Body of pancreas (tissue), 4 donors: ENCODE measurements at regions of chr6 and their contacts with region 1.

Region 1: GRCh38 chr6:53054532-53054931 is 10.7 kb upstream of the FBXO9 start:
- DNase-seq: no peak
- ATAC-seq: no peak
- H3K4me3 ChIP-seq: no peak overlapping the region
- H3K27ac ChIP-seq: no peak overlapping the region
- H3K4me1 ChIP-seq: peaks cover 35% of the 10 kb centered on the region
- H3K27me3 ChIP-seq: no peaks in the 10 kb centered on the region
- CTCF ChIP-seq: no peak
- POLR2A ChIP-seq: no peak

Region 2: DNA sequence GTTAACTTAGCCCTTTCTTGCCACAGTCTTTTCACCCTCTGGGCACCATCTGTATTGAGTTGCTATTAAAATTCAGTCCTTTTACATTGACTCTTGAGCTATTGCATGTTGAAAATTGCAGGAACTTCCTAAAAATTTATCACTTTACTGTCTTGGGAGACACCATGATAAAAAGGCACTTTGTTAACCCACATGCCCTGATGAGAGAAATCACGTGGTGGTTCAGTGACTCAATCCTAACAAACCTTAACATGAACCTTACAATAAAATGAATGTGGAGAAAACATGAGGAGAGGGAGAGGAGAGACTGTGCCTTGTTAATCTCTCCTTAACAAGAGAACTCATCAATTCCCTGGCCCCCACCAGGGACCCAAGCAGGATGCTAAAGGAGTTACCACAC is 90.2 kb before region 1 on chr6:
- intact Hi-C with region 1: no loop called
- DNase-seq: no peak
- ATAC-seq: no peak
- H3K4me3 ChIP-seq: no peak overlapping the region
- H3K27ac ChIP-seq: no peak overlapping the region
- H3K4me1 ChIP-seq: no peaks in the 10 kb centered on the region
- H3K27me3 ChIP-seq: no peaks in the 10 kb centered on the region
- CTCF ChIP-seq: no peak
- POLR2A ChIP-seq: no peak

Region 3: GRCh38 chr6:53005663-53006250 is 48.8 kb before region 1 on chr6:
- intact Hi-C with region 1: loop called (anchors 5 kb)
- DNase-seq: no peak
- ATAC-seq: no peak
- H3K4me3 ChIP-seq: no peak overlapping the region
- H3K27ac ChIP-seq: no peak overlapping the region
- H3K4me1 ChIP-seq: no peaks in the 10 kb centered on the region
- H3K27me3 ChIP-seq: no peaks in the 10 kb centered on the region
- CTCF ChIP-seq: no peak
- POLR2A ChIP-seq: no peak